Heart left ventricle (tissue), 16 donors: ENCODE measurements at regions of chr11 and their contacts with region 1.

Region 1: DNA sequence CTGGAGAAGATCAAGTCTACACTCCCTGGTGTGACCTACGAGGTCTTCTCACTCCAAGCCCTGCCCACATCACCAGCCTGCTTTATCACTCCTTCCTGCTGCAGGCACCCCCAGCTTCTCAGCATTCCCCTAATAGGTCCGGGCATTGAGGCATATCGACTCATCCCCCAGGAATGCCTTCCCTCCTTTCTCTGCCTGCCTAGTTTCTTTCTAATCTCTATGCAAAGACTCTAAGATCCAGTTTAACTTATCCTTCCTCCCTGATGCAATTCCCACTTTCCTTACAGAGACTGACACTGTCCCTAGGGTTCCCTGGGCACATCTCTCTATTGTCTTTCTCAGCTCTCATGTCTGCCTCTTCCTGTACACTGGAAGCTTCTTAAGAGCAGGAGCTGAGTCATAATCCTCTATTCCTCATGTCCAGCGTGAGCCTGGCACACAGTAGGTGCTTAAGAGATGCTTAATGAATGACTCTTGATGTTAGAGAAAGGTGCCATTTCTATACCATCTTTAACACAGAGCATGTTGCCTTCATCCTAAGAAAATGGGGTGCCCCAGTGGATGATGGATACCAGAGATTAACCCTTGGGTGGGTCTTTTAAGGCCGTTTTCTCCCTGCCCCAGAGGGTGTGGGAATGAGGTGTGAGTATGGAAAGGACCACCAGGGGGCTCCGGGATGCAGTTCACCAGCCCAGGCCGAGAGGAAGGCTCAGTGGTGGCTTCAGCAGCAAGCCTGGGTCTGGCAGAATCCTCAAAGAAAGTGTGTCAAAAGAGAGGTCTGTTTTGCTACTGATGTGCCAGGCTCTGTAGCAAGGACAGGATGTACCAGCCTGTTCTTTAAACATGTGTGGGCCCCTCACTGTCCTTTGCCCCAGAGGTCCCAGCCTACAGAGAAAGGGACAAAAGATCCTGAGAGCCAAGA is 34.7 kb downstream of the PARVA start:
- DNase-seq: peak in 4 of 5 donors; percentile 59 to 74 (median 72)
- ATAC-seq: peak; percentile 81 to 88 (median 84)
- H3K4me3 ChIP-seq: no peak overlapping the region
- H3K27ac ChIP-seq: peak overlapping the region in 9 of 12 donors; percentile 5 to 98 (median 31)
- H3K4me1 ChIP-seq: peaks cover 0 to 77% (median 44%) of the 10 kb centered on the region in 12 donors
- H3K27me3 ChIP-seq: no peaks in the 10 kb centered on the region
- CTCF ChIP-seq: peak; percentile 57 to 85 (median 78)
- POLR2A ChIP-seq: no peak

Region 2: DNA sequence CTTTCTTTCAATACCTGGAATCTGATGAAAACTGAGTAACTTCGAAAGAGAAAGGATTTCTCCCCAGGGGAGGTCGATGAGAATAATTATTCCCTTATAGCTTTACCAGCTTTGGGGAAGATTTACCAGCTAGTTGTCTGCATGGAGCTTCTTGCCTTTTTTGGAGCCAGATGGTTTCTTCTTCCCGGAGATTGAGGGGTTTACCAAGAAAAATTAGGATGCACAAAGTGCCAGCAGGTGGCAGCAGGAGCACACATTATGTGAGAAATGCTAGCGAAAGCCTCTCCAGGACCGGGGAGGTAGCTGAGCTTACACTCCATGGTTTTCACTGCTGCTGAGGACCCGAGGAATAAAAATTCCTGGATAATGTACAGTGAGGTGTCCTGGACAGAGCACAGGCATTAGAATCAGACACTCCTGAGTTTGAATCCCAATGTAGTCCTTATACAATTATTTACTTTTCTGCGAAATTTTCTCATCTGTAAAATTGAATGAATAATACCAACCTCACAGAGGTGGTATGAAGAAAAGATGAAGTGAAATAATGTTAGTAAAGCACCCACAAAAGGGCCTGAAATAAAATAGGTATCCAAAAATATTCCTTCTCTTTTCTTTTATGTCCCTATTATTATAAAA is 80.7 kb before region 1 on chr11:
- intact Hi-C with region 1: loop called in 3 of 10 experiments (anchors 2 to 10 kb)
- DNase-seq: peak; percentile 77 to 90 (median 79)
- ATAC-seq: peak; percentile 71 to 90 (median 82)
- H3K4me3 ChIP-seq: no peak overlapping the region
- H3K27ac ChIP-seq: peak overlapping the region in 1 of 12 donors; percentile 73
- H3K4me1 ChIP-seq: peaks cover 0 to 6% (median 0%) of the 10 kb centered on the region in 12 donors
- H3K27me3 ChIP-seq: no peaks in the 10 kb centered on the region
- CTCF ChIP-seq: peak; percentile 61 to 87 (median 79)
- POLR2A ChIP-seq: no peak

Region 3: DNA sequence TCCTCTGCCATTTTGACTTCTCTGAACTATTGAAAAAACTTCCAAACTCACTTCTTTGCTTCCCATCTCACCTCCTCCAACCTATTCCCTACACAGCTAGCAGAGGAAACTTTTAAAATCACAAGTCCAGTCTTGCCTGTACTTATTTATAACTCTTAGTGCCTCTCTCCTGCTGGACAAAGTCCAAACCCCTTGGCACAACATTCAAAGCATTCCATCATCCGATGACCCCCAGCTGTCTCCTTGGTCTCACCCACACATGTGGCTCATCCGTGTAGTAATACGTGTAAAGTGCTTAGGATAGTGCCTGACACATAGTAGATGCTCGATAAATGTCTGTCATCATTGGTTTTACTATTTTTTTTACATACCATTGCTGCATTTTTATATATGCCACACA is 66.7 kb after region 1 on chr11:
- intact Hi-C with region 1: loop called in 3 of 10 experiments (anchors 5 to 10 kb)
- DNase-seq: peak in 4 of 5 donors; percentile 35 to 56 (median 50)
- ATAC-seq: peak; percentile 16 to 59 (median 51)
- H3K4me3 ChIP-seq: no peak overlapping the region
- H3K27ac ChIP-seq: peak overlapping the region in 7 of 12 donors; percentile 5 to 69 (median 48)
- H3K4me1 ChIP-seq: peaks cover 0 to 27% (median 12%) of the 10 kb centered on the region in 12 donors
- H3K27me3 ChIP-seq: no peaks in the 10 kb centered on the region
- CTCF ChIP-seq: no peak
- POLR2A ChIP-seq: no peak

Region 4: GRCh38 chr11:12496171-12497025 is 84.3 kb after region 1 on chr11:
- intact Hi-C with region 1: loop called in 3 of 10 experiments (anchors 5 to 10 kb)
- DNase-seq: no peak
- ATAC-seq: peak; percentile 38 to 69 (median 52)
- H3K4me3 ChIP-seq: no peak overlapping the region
- H3K27ac ChIP-seq: no peak overlapping the region
- H3K4me1 ChIP-seq: peaks cover 0 to 7% (median 0%) of the 10 kb centered on the region in 12 donors
- H3K27me3 ChIP-seq: no peaks in the 10 kb centered on the region
- CTCF ChIP-seq: peak in 8 of 12 donors; percentile 6 to 44 (median 18)
- POLR2A ChIP-seq: no peak

Region 5: GRCh38 chr11:12813371-12814225 is 401.5 kb after region 1 on chr11:
- intact Hi-C with region 1: loop called in 1 of 10 experiments (anchors 10 kb)
- DNase-seq: peak in 3 of 5 donors; percentile 26 to 54 (median 53)
- ATAC-seq: peak in 3 of 4 donors; percentile 27 to 47 (median 39)
- H3K4me3 ChIP-seq: no peak overlapping the region
- H3K27ac ChIP-seq: peak overlapping the region in 10 of 12 donors; percentile 4 to 76 (median 47)
- H3K4me1 ChIP-seq: peaks cover 3 to 67% (median 49%) of the 10 kb centered on the region in 12 donors
- H3K27me3 ChIP-seq: no peaks in the 10 kb centered on the region
- CTCF ChIP-seq: no peak
- POLR2A ChIP-seq: no peak

Region 6: DNA sequence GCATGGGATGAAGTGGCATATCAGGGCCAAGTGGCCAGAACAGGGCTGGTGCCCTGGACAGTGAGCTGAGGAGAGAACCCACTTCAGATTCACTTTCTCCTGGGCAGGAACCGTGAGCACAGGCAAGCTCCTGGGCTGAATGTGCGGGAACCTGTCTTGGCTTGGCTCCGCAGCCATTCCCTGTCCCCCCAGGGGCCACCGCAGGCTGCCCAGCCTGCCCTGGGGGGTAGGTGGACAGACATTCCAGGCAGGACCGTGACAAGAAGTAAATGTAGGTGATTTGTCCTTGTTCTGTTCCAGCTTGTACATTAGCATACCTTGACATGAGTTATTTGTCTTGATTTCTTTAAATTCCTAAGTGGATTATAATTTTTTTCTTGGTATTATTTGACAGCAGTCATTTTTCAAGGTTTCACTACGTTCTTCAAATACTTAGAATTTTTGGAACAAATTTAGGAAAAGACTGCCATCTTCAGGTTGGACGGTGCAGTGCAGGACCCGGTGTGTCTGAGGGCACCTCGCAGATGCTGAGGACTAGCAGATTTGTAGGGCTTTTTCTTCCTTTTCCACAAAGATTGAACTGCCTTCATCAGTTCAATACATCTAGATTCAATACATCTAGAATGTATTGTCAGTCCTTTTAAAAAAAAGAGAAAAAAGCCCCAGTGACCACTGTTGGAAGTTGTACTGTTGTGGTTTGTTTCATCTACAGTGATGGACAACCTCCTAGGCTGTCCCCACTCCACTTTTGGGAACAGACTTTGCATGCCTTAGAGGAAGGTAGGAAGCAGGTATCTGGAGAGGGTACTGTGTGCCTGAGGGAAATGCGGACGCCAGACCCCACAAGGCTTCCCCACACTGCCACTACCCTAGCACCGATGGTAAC is 482.0 kb after region 1 on chr11:
- intact Hi-C with region 1: loop called in 9 of 10 experiments (anchors 2 to 5 kb)
- DNase-seq: peak in 3 of 5 donors; percentile 40 to 51 (median 49)
- ATAC-seq: no peak
- H3K4me3 ChIP-seq: no peak overlapping the region
- H3K27ac ChIP-seq: peak overlapping the region in 6 of 12 donors; percentile 16 to 84 (median 38)
- H3K4me1 ChIP-seq: peaks cover 0 to 53% (median 21%) of the 10 kb centered on the region in 12 donors
- H3K27me3 ChIP-seq: no peaks in the 10 kb centered on the region
- CTCF ChIP-seq: peak; percentile 79 to 94 (median 89)
- POLR2A ChIP-seq: no peak